MCF 10A (cell line): ENCODE measurements at regions of chr1 and their contacts with region 1.

Region 1: GRCh38 chr1:223123011-223123610 is 19.9 kb downstream of the TLR5 start:
- DNase-seq: no peak
- H3K4me3 Mint-ChIP-seq: peak overlapping the region; percentile 3
- H3K27ac Mint-ChIP-seq: no peak overlapping the region
- H3K4me1 Mint-ChIP-seq: peaks cover 9% of the 10 kb centered on the region
- H3K27me3 Mint-ChIP-seq: no peaks in the 10 kb centered on the region
- CTCF ChIP-seq: no peak

Region 2: DNA sequence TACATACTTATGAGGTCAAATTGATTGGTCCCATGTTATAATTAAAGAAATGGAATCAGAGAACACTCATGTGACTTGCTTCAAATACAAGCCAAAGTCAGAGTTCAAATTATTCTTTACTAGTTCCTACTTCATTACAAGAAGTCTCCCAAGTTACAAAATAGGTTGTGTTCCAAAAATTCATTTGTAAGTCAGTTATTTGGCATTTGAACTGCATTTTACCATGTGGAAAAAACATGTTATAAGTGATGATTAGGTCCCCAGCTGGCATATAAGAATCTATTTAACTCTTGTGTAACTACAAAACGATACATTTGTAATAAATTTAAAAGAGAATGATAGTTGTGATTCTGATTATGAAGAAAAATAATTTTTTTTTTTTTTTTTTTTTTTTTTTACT is 184.1 kb before region 1 on chr1:
- CTCF ChIA-PET with region 1: no interaction called
- POLR2A ChIA-PET with region 1: no interaction called
- intact Hi-C with region 1: no loop called
- DNase-seq: no peak
- H3K4me3 Mint-ChIP-seq: no peak overlapping the region
- H3K27ac Mint-ChIP-seq: no peak overlapping the region
- H3K4me1 Mint-ChIP-seq: no peaks in the 10 kb centered on the region
- H3K27me3 Mint-ChIP-seq: no peaks in the 10 kb centered on the region
- CTCF ChIP-seq: no peak

Region 3: GRCh38 chr1:223081181-223081994 is 41.7 kb before region 1 on chr1:
- CTCF ChIA-PET with region 1: interaction called, 20 read pairs
- POLR2A ChIA-PET with region 1: no interaction called
- intact Hi-C with region 1: no loop called
- DNase-seq: peak; percentile 100
- H3K4me3 Mint-ChIP-seq: peak overlapping the region; percentile 59
- H3K27ac Mint-ChIP-seq: peak overlapping the region; percentile 96
- H3K4me1 Mint-ChIP-seq: no peaks in the 10 kb centered on the region
- H3K27me3 Mint-ChIP-seq: peaks cover 33% of the 10 kb centered on the region
- CTCF ChIP-seq: peak; percentile 100

Region 4: DNA sequence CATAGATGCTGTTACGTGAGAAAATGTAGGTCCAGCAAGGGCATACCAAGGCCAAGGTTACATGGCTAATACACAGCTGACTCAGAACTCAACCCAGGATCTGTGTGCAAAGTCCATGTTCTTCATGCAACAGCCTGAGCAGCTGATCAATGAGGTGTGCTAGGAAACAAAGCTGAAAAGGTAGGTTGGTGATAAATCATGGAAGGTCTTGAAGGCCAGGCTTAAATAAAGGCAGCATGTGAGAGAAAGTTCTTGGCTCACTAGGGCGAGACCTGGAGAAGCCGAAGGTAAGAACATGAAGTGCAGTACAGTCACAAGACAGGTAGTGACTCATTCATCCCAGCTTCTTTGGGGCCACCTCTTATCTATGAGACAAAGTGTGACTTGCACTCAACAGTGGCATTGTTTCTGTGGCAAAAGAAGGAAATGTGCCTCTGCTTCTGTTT is 13.5 kb before region 1 on chr1:
- CTCF ChIA-PET with region 1: interaction called, 94 read pairs
- POLR2A ChIA-PET with region 1: interaction called, 4 read pairs
- intact Hi-C with region 1: no loop called
- DNase-seq: peak; percentile 27
- H3K4me3 Mint-ChIP-seq: no peak overlapping the region
- H3K27ac Mint-ChIP-seq: no peak overlapping the region
- H3K4me1 Mint-ChIP-seq: peaks cover 15% of the 10 kb centered on the region
- H3K27me3 Mint-ChIP-seq: no peaks in the 10 kb centered on the region
- CTCF ChIP-seq: no peak

Region 5: GRCh38 chr1:223244366-223245103 is 121.4 kb after region 1 on chr1:
- CTCF ChIA-PET with region 1: interaction called, 11 read pairs
- POLR2A ChIA-PET with region 1: no interaction called
- intact Hi-C with region 1: no loop called
- DNase-seq: peak; percentile 36
- H3K4me3 Mint-ChIP-seq: no peak overlapping the region
- H3K27ac Mint-ChIP-seq: no peak overlapping the region
- H3K4me1 Mint-ChIP-seq: peaks cover 7% of the 10 kb centered on the region
- H3K27me3 Mint-ChIP-seq: no peaks in the 10 kb centered on the region
- CTCF ChIP-seq: no peak

Region 6: DNA sequence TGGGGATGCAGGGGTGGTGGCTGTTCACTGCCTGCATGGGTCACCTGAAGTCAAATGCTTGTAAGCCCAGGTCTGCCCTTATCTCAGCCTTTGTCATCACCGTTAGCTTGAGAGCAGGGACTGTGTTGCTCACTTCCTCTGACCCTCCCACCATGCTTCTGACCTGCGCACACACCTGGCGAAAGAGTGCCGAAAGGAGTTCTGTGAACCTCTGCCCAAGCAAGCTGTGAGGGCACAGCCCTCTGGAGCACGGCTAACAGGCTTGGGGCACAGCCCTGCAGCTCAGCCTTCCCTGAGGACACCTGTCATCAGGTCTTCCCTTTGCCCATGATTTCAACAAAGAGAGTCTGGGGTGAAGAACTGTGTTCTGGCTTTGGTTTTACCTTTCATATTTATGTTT is 147.0 kb after region 1 on chr1:
- CTCF ChIA-PET with region 1: no interaction called
- POLR2A ChIA-PET with region 1: no interaction called
- intact Hi-C with region 1: no loop called
- DNase-seq: no peak
- H3K4me3 Mint-ChIP-seq: no peak overlapping the region
- H3K27ac Mint-ChIP-seq: no peak overlapping the region
- H3K4me1 Mint-ChIP-seq: no peaks in the 10 kb centered on the region
- H3K27me3 Mint-ChIP-seq: no peaks in the 10 kb centered on the region
- CTCF ChIP-seq: no peak

Region 7: DNA sequence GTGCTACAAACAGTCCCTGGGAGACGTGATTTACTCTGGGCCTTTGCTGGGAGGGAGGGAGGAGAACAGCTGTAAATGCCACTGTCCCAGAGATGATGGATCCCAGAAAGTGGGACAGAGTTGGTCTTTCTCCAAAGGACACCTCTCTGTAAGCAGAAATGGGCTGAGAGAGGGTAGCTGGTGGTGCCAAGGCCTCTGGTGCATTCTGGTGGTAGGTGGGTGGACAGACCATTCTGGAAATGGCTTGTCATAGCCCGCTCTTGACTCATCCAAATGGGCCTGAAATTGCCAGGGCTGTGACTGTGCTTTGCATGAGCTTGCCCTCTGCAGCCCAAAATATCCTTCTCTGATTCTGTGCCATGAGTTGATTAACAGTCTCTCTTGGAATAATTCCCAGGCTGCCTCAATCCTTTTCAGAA is 306.2 kb after region 1 on chr1:
- CTCF ChIA-PET with region 1: interaction called, 22 read pairs
- POLR2A ChIA-PET with region 1: no interaction called
- intact Hi-C with region 1: no loop called
- DNase-seq: peak; percentile 95
- H3K4me3 Mint-ChIP-seq: no peak overlapping the region
- H3K27ac Mint-ChIP-seq: no peak overlapping the region
- H3K4me1 Mint-ChIP-seq: peaks cover 14% of the 10 kb centered on the region
- H3K27me3 Mint-ChIP-seq: no peaks in the 10 kb centered on the region
- CTCF ChIP-seq: no peak